ENCODE measurements at regions of chr11 and their contacts with region 1.

Region 1: DNA sequence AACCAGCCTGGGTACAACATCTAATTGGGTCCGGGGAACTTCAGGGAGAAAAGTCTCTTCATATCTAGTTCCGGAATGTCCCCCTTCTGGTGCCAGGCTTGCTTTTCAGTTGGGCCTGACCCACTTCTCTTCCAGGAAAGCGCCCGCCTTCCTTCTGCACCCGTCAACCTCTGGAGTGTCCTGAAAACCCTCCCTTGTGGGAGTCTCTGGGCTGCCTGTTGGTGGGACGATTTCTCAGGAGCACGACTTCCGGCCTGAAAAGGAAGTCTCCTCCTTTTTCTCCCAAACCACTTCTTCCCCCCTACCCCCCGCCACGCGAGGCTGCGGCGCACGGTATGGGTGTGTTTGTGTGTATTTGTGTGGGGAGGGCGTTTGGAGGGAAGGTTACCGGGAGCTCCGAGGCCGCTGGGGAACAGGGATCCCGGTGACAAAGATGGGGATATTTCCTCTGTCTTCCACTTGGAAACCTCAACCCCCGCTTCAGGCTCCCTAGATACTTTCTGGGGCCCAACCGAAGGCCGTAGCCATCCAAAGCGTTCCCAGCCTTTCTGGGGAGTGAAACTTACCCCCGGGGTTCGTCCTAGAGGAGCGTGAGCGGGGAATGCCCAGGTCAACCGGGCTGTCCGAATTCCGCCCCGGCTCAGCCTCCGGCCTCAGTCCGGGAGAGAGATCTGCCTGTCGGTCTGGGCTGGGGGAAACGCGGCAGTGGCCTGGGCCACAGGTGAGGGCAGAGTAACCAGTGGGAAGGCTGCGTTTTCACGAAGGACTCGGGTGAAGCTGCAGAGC is at the start of gene NKAPD1:
- DNase-seq: peak; percentile 85 to 90 (median 86)
- H3K4me3 ChIP-seq: peak within 1 kb of the TSS; percentile 96 to 97
- H3K4me3 Mint-ChIP-seq: peak within 1 kb of the TSS; percentile 85 to 97 (median 94)
- H3K27ac ChIP-seq: peak within 1 kb of the TSS; percentile 80
- H3K27ac Mint-ChIP-seq: peak within 1 kb of the TSS; percentile 79 to 98 (median 96)
- H3K4me1 ChIP-seq: peaks cover 23% of the 10 kb centered on the region
- H3K4me1 Mint-ChIP-seq: peaks cover 26 to 36% (median 30%) of the 10 kb centered on the region in 4 donors
- H3K27me3 ChIP-seq: no peaks in the 10 kb centered on the region
- H3K27me3 Mint-ChIP-seq: peaks cover 6 to 7% of the 10 kb centered on the region in 2 donors
- total RNA-seq, gene NKAPD1: 20.9 to 21.2 TPM

Region 2: GRCh38 chr11:110200241-110200640 is 1874.0 kb before region 1 on chr11:
- CTCF ChIA-PET with region 1: no interaction called
- POLR2A ChIA-PET with region 1: no interaction called
- intact Hi-C with region 1: no loop called
- DNase-seq: no peak
- H3K4me3 ChIP-seq: no peak overlapping the region
- H3K4me3 Mint-ChIP-seq: no peak overlapping the region
- H3K27ac ChIP-seq: no peak overlapping the region
- H3K27ac Mint-ChIP-seq: no peak overlapping the region
- H3K4me1 ChIP-seq: no peaks in the 10 kb centered on the region
- H3K4me1 Mint-ChIP-seq: peaks cover 0 to 1% (median 0%) of the 10 kb centered on the region in 4 donors
- H3K27me3 ChIP-seq: no peaks in the 10 kb centered on the region
- H3K27me3 Mint-ChIP-seq: peaks cover 0 to 2% of the 10 kb centered on the region in 2 donors

Region 3: DNA sequence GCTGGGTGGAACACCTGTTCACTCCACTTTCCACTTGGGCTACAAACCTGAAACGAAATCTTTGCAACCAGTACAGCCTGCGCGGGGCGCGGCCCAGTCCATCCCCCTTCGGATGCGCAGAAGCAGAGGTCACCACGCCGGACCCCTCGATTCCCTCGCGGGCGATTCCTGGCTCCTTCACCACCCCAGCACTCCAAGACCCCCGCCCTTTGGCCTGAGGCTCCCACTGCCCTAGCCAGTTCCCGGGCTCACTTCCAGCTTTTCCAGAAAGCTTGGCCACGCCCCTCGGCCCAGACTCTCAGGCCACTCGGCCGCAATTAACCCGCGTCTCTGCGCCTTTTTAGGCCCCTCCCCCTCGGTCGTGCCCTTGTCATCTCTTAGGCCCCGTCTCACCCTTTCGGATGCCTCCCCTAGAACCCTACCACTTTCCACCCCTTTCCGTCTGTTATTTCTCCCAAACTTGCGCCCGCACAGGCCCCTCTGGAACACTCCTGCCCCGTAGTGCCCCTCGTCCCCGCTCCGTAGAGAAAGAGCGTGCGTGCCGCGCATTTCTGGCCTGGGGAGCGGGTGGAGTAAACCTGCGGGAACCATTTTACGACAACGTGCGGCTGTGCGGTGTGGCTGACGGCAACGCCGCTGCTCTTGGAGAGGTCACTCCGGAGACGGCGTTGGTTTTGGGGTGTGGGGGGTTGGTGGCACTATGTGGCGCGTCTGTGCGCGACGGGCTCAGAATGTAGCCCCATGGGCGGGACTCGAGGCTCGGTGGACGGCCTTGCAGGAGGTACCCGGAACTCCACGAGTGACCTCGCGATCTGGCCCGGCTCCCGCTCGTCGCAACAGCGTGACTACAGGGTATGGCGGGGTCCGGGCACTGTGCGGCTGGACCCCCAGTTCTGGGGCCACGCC is 49.2 kb before region 1 on chr11 and contains the start of gene DLAT:
- CTCF ChIA-PET with region 1: no interaction called
- POLR2A ChIA-PET with region 1: interaction called, 3 read pairs
- intact Hi-C with region 1: loop called (anchors 1 kb)
- DNase-seq: peak; percentile 85 to 89 (median 86)
- H3K4me3 ChIP-seq: peak within 1 kb of the TSS; percentile 99 to 100
- H3K4me3 Mint-ChIP-seq: peak within 1 kb of the TSS; percentile 97 to 100 (median 100)
- H3K27ac ChIP-seq: peak within 1 kb of the TSS; percentile 78
- H3K27ac Mint-ChIP-seq: peak within 1 kb of the TSS; percentile 92 to 100 (median 99)
- H3K4me1 ChIP-seq: peaks cover 15% of the 10 kb centered on the region
- H3K4me1 Mint-ChIP-seq: peaks cover 13 to 41% (median 27%) of the 10 kb centered on the region in 4 donors
- H3K27me3 ChIP-seq: no peaks in the 10 kb centered on the region
- H3K27me3 Mint-ChIP-seq: no peaks in the 10 kb centered on the region
- total RNA-seq, gene DLAT: 19.4 to 21.6 TPM

Measured in CD4-positive, alpha-beta memory T cell (primary cell).